Caco-2 (cell line): ENCODE measurements at regions of chr9 and their contacts with region 1.

Region 1: GRCh38 chr9:94672811-94673487 is 33.6 kb upstream of the FBP1 start:
- DNase-seq: no peak
- H3K4me3 ChIP-seq: no peak overlapping the region
- H3K4me3 Mint-ChIP-seq: no peak overlapping the region
- H3K27ac Mint-ChIP-seq: peak overlapping the region; percentile 27
- H3K4me1 ChIP-seq: peaks cover 32% of the 10 kb centered on the region
- H3K4me1 Mint-ChIP-seq: peaks cover 21% of the 10 kb centered on the region
- H3K27me3 ChIP-seq: no peaks in the 10 kb centered on the region
- H3K27me3 Mint-ChIP-seq: no peaks in the 10 kb centered on the region
- CTCF ChIP-seq: no peak

Region 2: GRCh38 chr9:94554439-94555391 is 118.2 kb before region 1 on chr9 and contains the start of gene PCAT7:
- CTCF ChIA-PET with region 1: interaction called, 13 read pairs
- POLR2A ChIA-PET with region 1: interaction called, 15 read pairs
- intact Hi-C with region 1: loop called (anchors 1 kb)
- DNase-seq: peak; percentile 87 to 89
- H3K4me3 ChIP-seq: peak within 1 kb of the TSS; percentile 48
- H3K4me3 Mint-ChIP-seq: no peak within 1 kb of the TSS
- H3K27ac Mint-ChIP-seq: no peak within 1 kb of the TSS
- H3K4me1 ChIP-seq: 0 out of 2 replicates have a peak, but pooled peaks cover 3% of the 10 kb centered on the region
- H3K4me1 Mint-ChIP-seq: peaks cover 11% of the 10 kb centered on the region
- H3K27me3 ChIP-seq: no peaks in the 10 kb centered on the region
- H3K27me3 Mint-ChIP-seq: no peaks in the 10 kb centered on the region
- CTCF ChIP-seq: peak; percentile 67 to 78
- total RNA-seq, gene PCAT7: 10.4 and 10.6 TPM in 2 replicates

Region 3: GRCh38 chr9:94894111-94894699 is 221.3 kb after region 1 on chr9:
- CTCF ChIA-PET with region 1: interaction called, 10 read pairs
- POLR2A ChIA-PET with region 1: interaction called, 17 read pairs
- intact Hi-C with region 1: no loop called
- DNase-seq: no peak
- H3K4me3 ChIP-seq: no peak overlapping the region
- H3K4me3 Mint-ChIP-seq: no peak overlapping the region
- H3K27ac Mint-ChIP-seq: no peak overlapping the region
- H3K4me1 ChIP-seq: peaks cover 11% of the 10 kb centered on the region; the same call in 1 of the 2 replicates
- H3K4me1 Mint-ChIP-seq: peaks cover 15% of the 10 kb centered on the region
- H3K27me3 ChIP-seq: no peaks in the 10 kb centered on the region
- H3K27me3 Mint-ChIP-seq: no peaks in the 10 kb centered on the region
- CTCF ChIP-seq: no peak

Region 4: DNA sequence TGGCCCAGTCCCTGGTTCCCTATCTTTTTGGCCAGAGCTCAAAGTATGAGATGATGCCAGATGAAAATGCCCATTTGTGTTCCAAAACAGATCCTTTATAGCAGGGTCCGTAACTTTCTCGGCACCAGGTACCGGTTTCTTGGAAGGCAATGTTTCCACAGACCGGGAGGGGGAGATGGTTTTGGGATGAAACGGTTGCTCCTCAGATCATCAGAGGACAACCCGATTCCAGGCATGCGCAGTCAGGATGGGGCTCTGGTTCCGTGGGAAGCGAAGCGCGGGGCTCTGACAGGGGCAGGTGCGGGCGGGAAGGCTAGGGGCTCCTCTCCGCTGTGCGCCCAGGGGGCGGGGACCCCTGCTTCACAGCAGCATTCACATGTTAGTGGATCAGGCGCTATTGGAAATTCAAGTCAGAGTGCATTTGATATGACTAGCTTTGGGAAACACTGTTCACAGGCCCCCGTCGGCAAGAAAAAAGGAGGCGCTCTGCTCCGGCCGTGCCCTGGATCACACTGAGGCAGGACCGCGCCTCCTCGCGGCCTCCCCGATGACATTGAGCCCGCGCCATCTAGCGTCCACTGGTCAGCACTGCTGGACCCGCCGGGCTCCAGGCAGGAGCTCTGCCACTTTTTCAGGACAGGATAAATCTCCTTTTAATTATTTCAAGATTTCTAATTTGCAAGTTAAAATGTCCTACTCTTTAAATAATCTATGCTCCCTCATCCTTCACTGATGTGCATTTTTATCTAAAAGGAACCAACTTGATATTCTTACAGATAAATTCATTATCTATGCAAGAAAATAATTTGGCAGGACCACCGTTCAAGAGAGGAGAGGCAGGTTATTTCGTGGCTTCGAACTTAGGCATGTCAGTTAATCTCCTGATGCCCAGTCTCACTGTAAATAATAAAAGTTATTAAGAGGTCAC is 454.6 kb after region 1 on chr9:
- CTCF ChIA-PET with region 1: interaction called, 18 read pairs
- POLR2A ChIA-PET with region 1: no interaction called
- intact Hi-C with region 1: loop called (anchors 2 kb)
- DNase-seq: peak; percentile 67 to 77
- H3K4me3 ChIP-seq: no peak overlapping the region
- H3K4me3 Mint-ChIP-seq: no peak overlapping the region
- H3K27ac Mint-ChIP-seq: no peak overlapping the region
- H3K4me1 ChIP-seq: no peaks in the 10 kb centered on the region
- H3K4me1 Mint-ChIP-seq: peaks cover 13% of the 10 kb centered on the region
- H3K27me3 ChIP-seq: no peaks in the 10 kb centered on the region
- H3K27me3 Mint-ChIP-seq: no peaks in the 10 kb centered on the region
- CTCF ChIP-seq: peak; percentile 71 to 95

Region 5: DNA sequence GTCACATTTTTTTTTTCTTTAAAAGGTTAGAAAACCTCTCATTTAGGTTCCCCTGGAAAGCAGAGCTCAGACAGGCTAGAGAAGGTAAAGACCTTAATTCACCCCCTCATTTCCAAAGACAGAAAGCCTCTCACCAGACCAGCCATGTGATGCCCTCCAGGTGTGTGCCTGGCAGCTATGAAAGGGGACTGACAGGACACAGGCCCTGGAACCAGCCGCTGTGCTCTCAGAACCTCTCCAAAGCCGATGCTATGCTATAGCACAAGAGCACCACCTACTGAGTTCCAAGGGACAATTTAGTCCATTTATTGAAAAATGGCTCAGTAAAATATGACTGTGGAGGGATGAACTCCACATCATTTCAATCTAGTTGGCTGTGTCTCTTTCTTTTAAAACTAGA is 595.7 kb after region 1 on chr9:
- CTCF ChIA-PET with region 1: no interaction called
- POLR2A ChIA-PET with region 1: no interaction called
- intact Hi-C with region 1: loop called (anchors 2 kb)
- DNase-seq: peak; percentile 60 to 68
- H3K4me3 ChIP-seq: no peak overlapping the region
- H3K4me3 Mint-ChIP-seq: peak overlapping the region; percentile 61
- H3K27ac Mint-ChIP-seq: peak overlapping the region; percentile 83
- H3K4me1 ChIP-seq: peaks cover 31% of the 10 kb centered on the region
- H3K4me1 Mint-ChIP-seq: peaks cover 33% of the 10 kb centered on the region
- H3K27me3 ChIP-seq: no peaks in the 10 kb centered on the region
- H3K27me3 Mint-ChIP-seq: no peaks in the 10 kb centered on the region
- CTCF ChIP-seq: peak; percentile 36 to 53